Naive thymus-derived CD4-positive, alpha-beta T cell (primary cell): ENCODE measurements at regions of chr14 and their contacts with region 1.

Region 1: DNA sequence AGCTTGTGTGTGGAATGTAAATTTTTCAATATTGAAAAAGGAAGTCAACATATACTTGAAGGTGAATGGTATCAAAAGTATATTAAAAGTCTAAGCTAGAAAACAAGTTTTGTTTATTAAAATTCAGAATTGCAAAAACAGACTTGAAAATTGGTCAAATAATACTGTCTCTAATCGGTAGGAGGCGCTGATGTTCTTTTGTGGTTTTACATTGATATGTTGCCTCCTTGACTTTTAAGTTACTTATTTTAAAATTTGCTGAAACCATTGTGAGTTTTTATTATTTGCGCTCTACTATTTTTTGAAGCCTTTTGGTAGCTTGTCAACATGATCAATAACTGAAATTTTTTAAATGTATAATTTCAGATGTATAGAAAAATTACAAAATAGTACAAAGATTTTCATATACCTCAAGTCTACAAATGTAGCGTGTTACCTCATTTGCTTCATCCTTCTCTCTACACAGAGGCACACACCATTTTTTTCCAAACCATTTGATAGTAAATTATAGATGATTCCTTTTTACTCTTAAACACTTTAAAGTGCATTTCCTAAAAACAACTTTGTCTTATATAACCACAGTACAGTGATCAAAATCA is 6.9 kb downstream of the RTRAF start:
- DNase-seq: peak in 6 of 9 donors; percentile 17 to 41 (median 30)
- ATAC-seq: no peak
- H3K4me3 ChIP-seq: no peak overlapping the region
- H3K4me3 Mint-ChIP-seq: no peak overlapping the region
- H3K27ac ChIP-seq: no peak overlapping the region
- H3K27ac Mint-ChIP-seq: peak overlapping the region in 2 of 9 donors; percentile 9 to 62
- H3K4me1 ChIP-seq: peaks cover 2 to 6% of the 10 kb centered on the region in 2 donors
- H3K4me1 Mint-ChIP-seq: peaks cover 13 to 59% (median 48%) of the 10 kb centered on the region in 7 donors
- H3K27me3 ChIP-seq: no peaks in the 10 kb centered on the region
- H3K27me3 Mint-ChIP-seq: no peaks in the 10 kb centered on the region

Region 2: DNA sequence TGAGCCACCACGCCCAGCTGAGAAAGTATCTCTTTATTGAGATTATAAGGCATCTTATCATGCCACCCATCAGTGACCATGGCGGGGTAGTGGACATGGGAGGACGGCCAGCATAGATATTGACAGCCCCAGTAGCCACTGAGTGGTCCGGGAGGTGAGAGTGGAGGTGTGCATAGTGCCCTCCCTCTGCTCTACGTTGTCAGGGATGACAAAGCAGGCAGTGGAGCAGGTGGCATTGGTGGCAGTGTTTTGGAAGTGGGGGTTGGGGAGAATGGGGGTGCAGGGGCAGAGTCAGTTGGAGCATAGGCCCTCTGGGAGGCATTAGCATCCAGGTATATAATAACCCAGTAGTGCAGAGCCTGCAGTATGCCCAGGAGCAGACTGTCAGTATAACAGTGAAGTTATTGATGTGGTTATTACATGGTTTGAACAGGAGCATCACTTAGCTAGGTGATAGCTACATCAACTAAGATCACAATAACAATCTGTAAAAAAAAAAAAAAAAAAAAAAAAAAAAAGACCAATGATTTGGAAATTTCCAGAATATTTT is 94.7 kb before region 1 on chr14:
- CTCF ChIA-PET with region 1: no interaction called
- POLR2A ChIA-PET with region 1: no interaction called
- intact Hi-C with region 1: no loop called
- DNase-seq: peak in 7 of 9 donors; percentile 16 to 56 (median 42)
- ATAC-seq: peak; percentile 66
- H3K4me3 ChIP-seq: no peak overlapping the region
- H3K4me3 Mint-ChIP-seq: peak overlapping the region in 5 of 10 donors; percentile 7 to 59 (median 30)
- H3K27ac ChIP-seq: no peak overlapping the region
- H3K27ac Mint-ChIP-seq: peak overlapping the region in 8 of 9 donors; percentile 54 to 94 (median 75)
- H3K4me1 ChIP-seq: peaks cover 36% of the 10 kb centered on the region in 2 donors
- H3K4me1 Mint-ChIP-seq: peaks cover 39 to 84% (median 75%) of the 10 kb centered on the region in 7 donors
- H3K27me3 ChIP-seq: no peaks in the 10 kb centered on the region
- H3K27me3 Mint-ChIP-seq: no peaks in the 10 kb centered on the region

Region 3: DNA sequence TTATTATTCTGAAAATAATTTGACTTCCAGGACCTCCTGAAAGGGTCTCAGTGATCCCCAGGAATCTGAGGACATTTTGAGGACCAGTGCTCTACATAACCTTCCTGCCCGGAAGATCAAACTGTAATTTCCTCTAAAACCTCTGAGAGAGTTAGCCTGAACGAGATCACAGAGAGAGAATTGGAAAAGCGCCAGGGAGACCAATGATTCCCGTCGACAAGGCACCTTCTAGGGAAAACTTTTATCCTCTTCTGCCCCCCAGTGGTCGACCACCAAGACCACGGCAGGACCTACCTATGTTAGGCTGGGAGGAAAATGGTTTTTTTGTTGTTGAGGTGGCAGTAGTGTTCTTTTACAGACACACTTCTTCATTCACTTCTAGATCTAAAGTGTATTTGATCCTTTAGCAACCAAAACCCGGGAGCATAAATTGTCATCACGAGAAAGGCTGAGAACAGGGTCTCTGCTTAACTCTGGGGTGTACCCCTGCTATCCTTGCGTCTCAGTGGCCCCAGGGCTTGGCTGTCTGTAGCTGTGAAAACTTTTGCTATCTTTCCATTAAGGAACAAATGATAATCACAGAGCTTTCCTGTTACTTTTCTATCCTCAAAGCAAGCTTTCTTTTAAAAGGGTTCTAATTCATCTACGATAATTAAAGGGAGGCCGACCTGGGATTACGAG is 135.5 kb after region 1 on chr14:
- CTCF ChIA-PET with region 1: no interaction called
- POLR2A ChIA-PET with region 1: no interaction called
- intact Hi-C with region 1: loop called in 1 of 2 experiments (anchors 1 kb)
- DNase-seq: peak in 2 of 9 donors; percentile 6 to 10
- ATAC-seq: no peak
- H3K4me3 ChIP-seq: no peak overlapping the region
- H3K4me3 Mint-ChIP-seq: no peak overlapping the region
- H3K27ac ChIP-seq: no peak overlapping the region
- H3K27ac Mint-ChIP-seq: no peak overlapping the region
- H3K4me1 ChIP-seq: peaks cover 0 to 6% of the 10 kb centered on the region in 2 donors
- H3K4me1 Mint-ChIP-seq: peaks cover 0 to 13% (median 5%) of the 10 kb centered on the region in 7 donors
- H3K27me3 ChIP-seq: no peaks in the 10 kb centered on the region
- H3K27me3 Mint-ChIP-seq: peaks cover 5 to 35% (median 10%) of the 10 kb centered on the region in 5 donors

Region 4: GRCh38 chr14:52146504-52146903 is 150.3 kb after region 1 on chr14:
- CTCF ChIA-PET with region 1: no interaction called
- POLR2A ChIA-PET with region 1: no interaction called
- intact Hi-C with region 1: no loop called
- DNase-seq: no peak
- ATAC-seq: no peak
- H3K4me3 ChIP-seq: no peak overlapping the region
- H3K4me3 Mint-ChIP-seq: no peak overlapping the region
- H3K27ac ChIP-seq: no peak overlapping the region
- H3K27ac Mint-ChIP-seq: no peak overlapping the region
- H3K4me1 ChIP-seq: peaks cover 0 to 21% of the 10 kb centered on the region in 2 donors
- H3K4me1 Mint-ChIP-seq: peaks cover 0 to 22% (median 0%) of the 10 kb centered on the region in 7 donors
- H3K27me3 ChIP-seq: no peaks in the 10 kb centered on the region
- H3K27me3 Mint-ChIP-seq: peaks cover 0 to 44% (median 18%) of the 10 kb centered on the region in 5 donors

Region 5: DNA sequence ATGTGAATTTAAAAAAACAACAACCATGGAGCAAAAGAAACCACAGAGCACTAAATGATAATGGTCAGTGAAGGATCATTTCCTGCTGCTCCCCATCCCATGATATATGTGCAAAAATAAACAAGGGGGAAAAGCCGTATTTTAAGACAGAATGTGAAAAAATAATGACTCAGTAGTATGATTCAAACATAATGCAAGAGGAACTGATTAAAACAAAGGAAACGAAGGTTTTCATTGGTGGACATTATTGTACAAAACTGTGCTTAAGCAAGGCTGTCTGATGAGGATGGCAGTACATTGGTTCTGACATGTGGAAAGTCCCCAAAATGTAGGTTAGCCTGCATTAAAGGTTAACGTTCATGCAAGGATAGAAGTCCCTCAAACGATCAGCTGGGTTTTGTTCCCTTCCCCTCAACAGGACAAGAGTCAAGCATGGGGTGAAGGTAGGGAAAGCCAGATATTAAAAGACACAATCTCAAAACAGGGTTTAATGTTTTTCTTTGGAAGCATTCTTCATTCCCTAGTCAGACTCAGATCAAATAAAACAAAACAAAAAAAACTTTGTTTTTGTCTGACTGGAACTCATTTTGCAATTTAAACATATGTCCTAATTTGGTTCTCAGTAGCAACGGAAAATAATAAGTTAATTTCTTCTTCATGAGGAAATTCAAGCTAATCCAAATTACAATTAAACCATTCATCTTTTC is 245.0 kb after region 1 on chr14:
- CTCF ChIA-PET with region 1: no interaction called
- POLR2A ChIA-PET with region 1: no interaction called
- intact Hi-C with region 1: no loop called
- DNase-seq: no peak
- ATAC-seq: no peak
- H3K4me3 ChIP-seq: no peak overlapping the region
- H3K4me3 Mint-ChIP-seq: no peak overlapping the region
- H3K27ac ChIP-seq: no peak overlapping the region
- H3K27ac Mint-ChIP-seq: no peak overlapping the region
- H3K4me1 ChIP-seq: peaks cover 0 to 14% of the 10 kb centered on the region in 2 donors
- H3K4me1 Mint-ChIP-seq: peaks cover 0 to 20% (median 7%) of the 10 kb centered on the region in 7 donors
- H3K27me3 ChIP-seq: no peaks in the 10 kb centered on the region
- H3K27me3 Mint-ChIP-seq: peaks cover 0 to 17% (median 0%) of the 10 kb centered on the region in 5 donors

Region 6: DNA sequence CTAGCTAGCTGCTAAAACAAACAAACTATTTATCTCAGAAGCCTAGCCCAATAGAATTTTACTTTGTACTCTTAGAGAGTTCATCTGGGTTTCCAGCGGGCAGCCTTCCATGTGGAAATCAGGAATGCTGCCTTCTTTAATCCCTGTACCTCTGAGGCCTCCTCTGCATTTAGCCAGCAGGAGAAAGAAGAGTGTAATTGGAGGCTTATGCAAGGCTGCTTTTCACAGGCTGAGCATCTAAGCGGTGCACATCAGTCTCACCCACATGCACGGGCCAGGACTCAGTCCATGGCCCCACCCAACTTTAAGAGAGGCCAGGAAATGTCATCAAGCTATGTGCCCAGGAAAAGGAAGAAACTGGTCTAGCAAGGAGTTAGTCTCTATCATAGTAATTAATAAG is 257.3 kb after region 1 on chr14:
- CTCF ChIA-PET with region 1: no interaction called
- POLR2A ChIA-PET with region 1: no interaction called
- intact Hi-C with region 1: no loop called
- DNase-seq: no peak
- ATAC-seq: no peak
- H3K4me3 ChIP-seq: no peak overlapping the region
- H3K4me3 Mint-ChIP-seq: no peak overlapping the region
- H3K27ac ChIP-seq: no peak overlapping the region
- H3K27ac Mint-ChIP-seq: no peak overlapping the region
- H3K4me1 ChIP-seq: peaks cover 0 to 10% of the 10 kb centered on the region in 2 donors
- H3K4me1 Mint-ChIP-seq: peaks cover 0 to 4% (median under 1%) of the 10 kb centered on the region in 7 donors
- H3K27me3 ChIP-seq: no peaks in the 10 kb centered on the region
- H3K27me3 Mint-ChIP-seq: peaks cover 8 to 31% (median 16%) of the 10 kb centered on the region in 5 donors

Region 7: GRCh38 chr14:52272375-52272774 is 276.1 kb after region 1 on chr14:
- CTCF ChIA-PET with region 1: no interaction called
- POLR2A ChIA-PET with region 1: interaction called, 3 read pairs
- intact Hi-C with region 1: loop called in 1 of 2 experiments (anchors 1 kb)
- DNase-seq: peak in 1 of 9 donors; percentile 23
- ATAC-seq: peak; percentile 64
- H3K4me3 ChIP-seq: no peak overlapping the region
- H3K4me3 Mint-ChIP-seq: peak overlapping the region in 1 of 10 donors; percentile 65
- H3K27ac ChIP-seq: no peak overlapping the region
- H3K27ac Mint-ChIP-seq: peak overlapping the region in 1 of 9 donors; percentile 43
- H3K4me1 ChIP-seq: peaks cover 0 to 11% of the 10 kb centered on the region in 2 donors
- H3K4me1 Mint-ChIP-seq: peaks cover 12 to 27% (median 19%) of the 10 kb centered on the region in 7 donors
- H3K27me3 ChIP-seq: no peaks in the 10 kb centered on the region
- H3K27me3 Mint-ChIP-seq: peaks cover 23 to 83% (median 33%) of the 10 kb centered on the region in 5 donors

Region 8: GRCh38 chr14:52473557-52473956 is 477.3 kb after region 1 on chr14:
- CTCF ChIA-PET with region 1: no interaction called
- POLR2A ChIA-PET with region 1: no interaction called
- intact Hi-C with region 1: loop called (anchors 1 kb)
- DNase-seq: peak in 7 of 9 donors; percentile 16 to 60 (median 42)
- ATAC-seq: peak; percentile 42
- H3K4me3 ChIP-seq: no peak overlapping the region
- H3K4me3 Mint-ChIP-seq: no peak overlapping the region
- H3K27ac ChIP-seq: no peak overlapping the region
- H3K27ac Mint-ChIP-seq: no peak overlapping the region
- H3K4me1 ChIP-seq: no peaks in the 10 kb centered on the region
- H3K4me1 Mint-ChIP-seq: peaks cover 4 to 40% (median 24%) of the 10 kb centered on the region in 7 donors
- H3K27me3 ChIP-seq: no peaks in the 10 kb centered on the region
- H3K27me3 Mint-ChIP-seq: no peaks in the 10 kb centered on the region